ENCODE measurements at regions of chr15 and their contacts with region 1.

Region 1: GRCh38 chr15:59917504-59918157 is 86.5 kb upstream of the FOXB1 start:
- DNase-seq: peak; percentile 48 to 78
- H3K4me3 ChIP-seq: no peak overlapping the region
- H3K27ac ChIP-seq: no peak overlapping the region
- H3K4me1 ChIP-seq: peaks cover 19% of the 10 kb centered on the region
- H3K27me3 ChIP-seq: no peaks in the 10 kb centered on the region
- CTCF ChIP-seq: peak; percentile 65

Region 2: GRCh38 chr15:59751552-59752413 is 165.8 kb before region 1 on chr15:
- CTCF ChIA-PET with region 1: no interaction called
- POLR2A ChIA-PET with region 1: interaction called, 5 read pairs
- intact Hi-C with region 1: loop called (anchors 1 kb)
- DNase-seq: peak; percentile 8 to 68
- H3K4me3 ChIP-seq: no peak overlapping the region
- H3K27ac ChIP-seq: no peak overlapping the region
- H3K4me1 ChIP-seq: no peaks in the 10 kb centered on the region
- H3K27me3 ChIP-seq: no peaks in the 10 kb centered on the region
- CTCF ChIP-seq: peak; percentile 62

Region 3: DNA sequence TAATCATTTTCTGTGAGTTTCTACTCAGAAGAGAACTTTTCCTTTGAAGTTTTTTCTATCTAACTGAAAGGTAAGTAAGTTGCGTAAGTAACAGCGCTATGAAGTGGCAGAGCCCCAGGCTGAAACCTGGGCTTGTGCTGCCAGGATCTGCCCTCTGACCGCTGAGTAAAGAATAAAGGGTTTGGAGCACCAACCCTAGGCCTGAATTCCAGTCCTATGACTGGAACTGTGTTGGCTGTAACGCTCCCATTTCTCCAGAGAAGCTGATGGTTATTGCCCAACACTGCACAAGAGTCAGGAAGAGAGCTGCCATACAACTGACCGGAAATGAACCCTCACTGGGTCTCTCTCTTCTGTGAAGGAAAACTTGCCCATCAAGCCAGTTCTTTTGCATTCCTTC is 173.5 kb after region 1 on chr15:
- CTCF ChIA-PET with region 1: no interaction called
- POLR2A ChIA-PET with region 1: no interaction called
- intact Hi-C with region 1: loop called (anchors 1 kb)
- DNase-seq: peak; percentile 87 to 98
- H3K4me3 ChIP-seq: no peak overlapping the region
- H3K27ac ChIP-seq: peak overlapping the region; percentile 96
- H3K4me1 ChIP-seq: peaks cover 69% of the 10 kb centered on the region
- H3K27me3 ChIP-seq: no peaks in the 10 kb centered on the region
- CTCF ChIP-seq: no peak

Region 4: GRCh38 chr15:60179786-60180391 is 262.3 kb after region 1 on chr15:
- CTCF ChIA-PET with region 1: no interaction called
- POLR2A ChIA-PET with region 1: no interaction called
- intact Hi-C with region 1: loop called (anchors 2 kb)
- DNase-seq: no peak
- H3K4me3 ChIP-seq: no peak overlapping the region
- H3K27ac ChIP-seq: no peak overlapping the region
- H3K4me1 ChIP-seq: no peaks in the 10 kb centered on the region
- H3K27me3 ChIP-seq: no peaks in the 10 kb centered on the region
- CTCF ChIP-seq: peak; percentile 78

Measured in PC-9 (cell line).